ENCODE measurements at regions of chr10 and their contacts with region 1.

Region 1: DNA sequence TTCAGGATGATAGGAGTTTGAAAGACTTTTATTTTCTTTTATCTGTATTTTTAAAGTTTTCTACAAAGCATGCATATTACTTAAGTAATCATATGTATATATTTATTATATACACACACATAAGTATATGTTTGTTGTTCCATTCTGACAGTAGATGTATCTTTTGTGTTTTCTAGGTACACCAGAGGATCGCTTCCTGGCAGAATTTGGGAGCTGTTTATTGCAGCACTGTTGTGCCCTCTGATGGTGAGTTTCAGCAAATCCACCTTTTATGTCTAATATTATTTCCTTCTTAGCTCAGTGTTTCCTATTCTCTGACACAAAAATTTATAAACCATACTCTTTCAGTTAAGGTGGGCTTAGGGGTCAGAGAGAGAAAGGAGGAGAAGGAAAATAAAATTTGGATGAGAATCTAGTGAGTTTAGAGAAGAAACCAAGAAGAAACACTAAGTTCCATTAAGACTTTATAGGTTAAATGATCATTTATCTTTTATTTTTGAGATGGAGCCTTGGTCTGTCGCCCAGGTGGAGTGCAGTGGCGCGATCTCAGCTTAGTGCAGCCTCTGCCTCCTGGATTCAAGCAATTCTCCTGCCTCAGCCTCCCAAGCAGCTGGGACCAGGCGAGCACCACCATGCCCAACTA is 59.2 kb upstream of the OIT3 start:
- DNase-seq: peak; percentile 53
- ATAC-seq: peak; percentile 44; the same call in 1 of the 3 replicates
- H3K4me3 ChIP-seq: no peak overlapping the region
- H3K27ac ChIP-seq: no peak overlapping the region
- H3K4me1 ChIP-seq: 0 out of 2 replicates have a peak, but pooled peaks cover 4% of the 10 kb centered on the region
- H3K27me3 ChIP-seq: no peaks in the 10 kb centered on the region
- CTCF ChIP-seq: peak; percentile 72
- EP300 ChIP-seq: no peak
- POLR2A ChIP-seq: no peak
- RAD21 ChIP-seq: peak; percentile 58; the same call in 1 of the 2 replicates

Region 2: DNA sequence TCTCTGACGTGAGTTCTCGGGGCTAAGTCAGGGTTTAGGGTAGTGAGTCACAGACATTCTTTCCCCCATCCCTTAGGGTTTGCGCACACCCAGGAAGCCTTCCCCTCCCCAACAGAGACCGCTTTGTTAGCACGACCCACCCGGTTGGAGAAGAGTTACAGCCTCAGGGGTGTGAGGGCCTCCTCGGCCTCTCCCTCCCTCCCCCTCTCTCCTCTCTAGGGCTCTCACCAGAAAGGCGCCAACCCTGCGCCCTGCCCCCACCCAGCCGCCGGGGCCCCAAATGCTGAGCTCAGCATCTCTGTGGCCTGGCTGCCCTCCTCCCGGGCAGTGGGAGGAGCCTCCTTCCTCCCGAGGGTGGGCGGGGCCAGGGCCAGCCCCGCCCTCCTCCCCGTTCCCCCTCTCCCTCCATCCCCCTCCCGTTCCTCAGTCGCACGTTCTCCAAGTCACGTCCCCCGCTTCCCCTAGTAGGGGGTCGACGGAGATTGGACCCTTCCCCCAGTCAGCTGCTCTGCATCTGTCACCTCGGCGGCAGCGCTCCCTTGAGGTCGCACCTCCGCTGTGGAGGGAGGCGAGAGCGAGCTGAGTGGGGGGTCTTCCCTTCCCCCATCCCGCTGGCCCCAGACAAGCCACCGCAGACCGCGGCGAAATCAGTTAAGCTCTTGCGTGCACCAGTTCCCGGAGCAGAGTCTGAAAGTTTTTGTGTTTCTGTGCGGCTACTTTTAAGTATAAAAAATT is 573.5 kb before region 1 on chr10:
- CTCF ChIA-PET with region 1: no interaction called
- POLR2A ChIA-PET with region 1: no interaction called
- in situ Hi-C with region 1: no loop called
- intact Hi-C with region 1: no loop called
- DNase-seq: peak; percentile 88
- ATAC-seq: peak; percentile 84
- H3K4me3 ChIP-seq: peak overlapping the region; percentile 50 to 74 (median 61)
- H3K27ac ChIP-seq: peak overlapping the region; percentile 91
- H3K4me1 ChIP-seq: peaks cover 84% of the 10 kb centered on the region
- H3K27me3 ChIP-seq: no peaks in the 10 kb centered on the region
- CTCF ChIP-seq: peak; percentile 85
- EP300 ChIP-seq: peak in 1 of 2 experiments; percentile 56; a peak in 1 of 4 replicates
- POLR2A ChIP-seq: peak; percentile 11 to 55; a peak in 2 of 4 replicates
- RAD21 ChIP-seq: no peak

Region 3: DNA sequence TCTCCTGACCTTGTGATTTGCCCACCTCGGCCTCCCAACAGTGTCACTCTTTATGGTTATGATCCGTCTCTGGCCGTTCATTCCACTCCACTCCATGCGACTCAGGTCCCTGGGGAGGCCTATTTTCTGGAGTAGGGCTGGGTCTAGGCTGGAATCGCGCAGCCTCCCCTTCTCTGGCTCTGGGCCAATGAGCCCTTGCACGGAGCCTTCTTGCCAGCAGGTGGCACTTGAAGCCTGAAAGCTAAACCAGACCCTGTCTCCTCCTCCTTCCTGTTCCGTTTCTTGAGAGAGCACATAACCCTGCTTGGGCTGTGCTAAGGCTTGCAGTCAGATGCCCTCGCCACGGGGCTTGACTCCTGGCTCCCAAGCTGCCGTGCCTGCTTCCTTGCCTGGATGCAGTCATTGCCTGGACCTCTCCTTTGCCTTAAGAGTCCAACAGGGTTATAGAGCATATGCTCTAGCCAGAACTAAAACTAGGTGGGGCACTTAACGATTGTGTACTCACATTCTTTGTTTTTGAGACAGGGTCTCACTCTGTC is 470.0 kb before region 1 on chr10:
- CTCF ChIA-PET with region 1: interaction called, 18 read pairs
- POLR2A ChIA-PET with region 1: no interaction called
- in situ Hi-C with region 1: loop called (anchors 10 kb)
- intact Hi-C with region 1: loop called (anchors 1 kb)
- DNase-seq: peak; percentile 68
- ATAC-seq: peak; percentile 83
- H3K4me3 ChIP-seq: no peak overlapping the region
- H3K27ac ChIP-seq: no peak overlapping the region
- H3K4me1 ChIP-seq: peaks cover 10% of the 10 kb centered on the region
- H3K27me3 ChIP-seq: no peaks in the 10 kb centered on the region
- CTCF ChIP-seq: peak; percentile 94
- EP300 ChIP-seq: no peak
- POLR2A ChIP-seq: no peak
- RAD21 ChIP-seq: peak; percentile 81

Region 4: DNA sequence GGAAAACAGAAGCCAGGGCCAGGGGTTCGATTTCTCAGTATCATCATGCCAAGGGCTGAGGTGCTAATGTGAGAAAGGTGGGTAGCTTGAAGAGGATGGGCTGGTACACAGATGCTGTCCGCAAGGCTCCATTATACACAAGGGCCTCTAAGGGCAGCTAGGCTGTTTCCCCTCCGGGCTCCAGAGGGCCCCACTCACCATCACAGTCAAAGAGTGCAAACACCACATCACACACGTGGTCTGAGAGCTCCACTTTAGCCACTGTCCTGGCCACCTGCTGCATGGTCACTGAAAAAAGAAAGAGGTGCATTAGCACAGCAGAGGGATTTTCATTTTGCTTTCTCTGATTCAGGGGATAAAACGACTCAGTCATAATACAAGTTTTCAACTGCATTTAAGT is 458.7 kb before region 1 on chr10:
- CTCF ChIA-PET with region 1: interaction called, 3 read pairs
- POLR2A ChIA-PET with region 1: no interaction called
- in situ Hi-C with region 1: no loop called
- intact Hi-C with region 1: loop called (anchors 1 kb)
- DNase-seq: peak; percentile 53
- ATAC-seq: peak; percentile 99
- H3K4me3 ChIP-seq: no peak overlapping the region
- H3K27ac ChIP-seq: no peak overlapping the region
- H3K4me1 ChIP-seq: no peaks in the 10 kb centered on the region
- H3K27me3 ChIP-seq: no peaks in the 10 kb centered on the region
- CTCF ChIP-seq: peak; percentile 62
- EP300 ChIP-seq: no peak
- POLR2A ChIP-seq: no peak
- RAD21 ChIP-seq: peak; percentile 53

Region 5: DNA sequence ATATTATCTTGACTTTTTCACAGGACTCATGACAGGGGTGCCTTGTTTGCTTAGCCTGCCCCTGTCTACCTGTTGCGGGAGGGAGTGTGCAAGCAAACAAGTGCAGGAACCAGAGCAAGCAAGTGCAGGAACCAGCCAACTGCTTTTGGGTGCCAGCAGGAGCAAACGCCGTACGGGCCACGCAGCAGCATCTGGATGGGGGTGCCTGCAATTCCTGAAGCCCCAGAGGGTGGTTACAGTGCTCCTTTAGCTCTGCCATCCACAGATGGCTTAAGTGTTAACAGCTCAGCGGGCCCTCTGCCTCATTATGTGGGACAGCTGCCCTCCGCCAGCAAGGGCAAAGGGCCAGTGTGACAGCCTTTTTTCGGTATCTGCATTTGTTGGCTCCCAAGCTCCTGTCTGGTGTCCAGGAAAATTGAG is 291.9 kb before region 1 on chr10:
- CTCF ChIA-PET with region 1: no interaction called
- POLR2A ChIA-PET with region 1: no interaction called
- in situ Hi-C with region 1: no loop called
- intact Hi-C with region 1: loop called (anchors 10 kb)
- DNase-seq: peak; percentile 43
- ATAC-seq: peak; percentile 57
- H3K4me3 ChIP-seq: no peak overlapping the region
- H3K27ac ChIP-seq: peak overlapping the region; percentile 25
- H3K4me1 ChIP-seq: peaks cover 74% of the 10 kb centered on the region
- H3K27me3 ChIP-seq: no peaks in the 10 kb centered on the region
- CTCF ChIP-seq: no peak
- EP300 ChIP-seq: no peak
- POLR2A ChIP-seq: no peak
- RAD21 ChIP-seq: no peak

Region 6: GRCh38 chr10:73252445-73253224 is 418.3 kb after region 1 on chr10 and contains the start of gene MRPS16:
- CTCF ChIA-PET with region 1: no interaction called
- POLR2A ChIA-PET with region 1: no interaction called
- in situ Hi-C with region 1: no loop called
- intact Hi-C with region 1: no loop called
- DNase-seq: peak; percentile 95
- ATAC-seq: peak; percentile 87
- H3K4me3 ChIP-seq: peak within 1 kb of the TSS; percentile 78 to 92 (median 84)
- H3K27ac ChIP-seq: peak within 1 kb of the TSS; percentile 88
- H3K4me1 ChIP-seq: peaks cover 33% of the 10 kb centered on the region
- H3K27me3 ChIP-seq: no peaks in the 10 kb centered on the region; a peak in 1 of 5 replicates
- CTCF ChIP-seq: no peak
- EP300 ChIP-seq: peak in 1 of 2 experiments; percentile 46; a peak in 2 of 4 replicates
- POLR2A ChIP-seq: peak; percentile 74 to 90
- RAD21 ChIP-seq: peak; percentile 40; the same call in 1 of the 2 replicates
- total RNA-seq, gene MRPS16: 135 and 189 TPM in 2 replicates